ENCODE measurements at regions of chr6 and their contacts with region 1.

Region 1: GRCh38 chr6:163860287-163861081 is 446.0 kb downstream of the QKI start:
- DNase-seq: peak; percentile 86
- ATAC-seq: peak; percentile 79
- H3K4me3 ChIP-seq: peak overlapping the region; percentile 11; the same call in 1 of the 2 replicates
- H3K27ac ChIP-seq: peak overlapping the region; percentile 85
- H3K4me1 ChIP-seq: 0 out of 2 replicates have a peak, but pooled peaks cover 2% of the 10 kb centered on the region
- H3K27me3 ChIP-seq: no peaks in the 10 kb centered on the region
- CTCF ChIP-seq: no peak
- POLR2A ChIP-seq: 0 out of 2 replicates have a peak, but pooled peaks have one; percentile 47
- RAD21 ChIP-seq: peak; percentile 23

Region 2: DNA sequence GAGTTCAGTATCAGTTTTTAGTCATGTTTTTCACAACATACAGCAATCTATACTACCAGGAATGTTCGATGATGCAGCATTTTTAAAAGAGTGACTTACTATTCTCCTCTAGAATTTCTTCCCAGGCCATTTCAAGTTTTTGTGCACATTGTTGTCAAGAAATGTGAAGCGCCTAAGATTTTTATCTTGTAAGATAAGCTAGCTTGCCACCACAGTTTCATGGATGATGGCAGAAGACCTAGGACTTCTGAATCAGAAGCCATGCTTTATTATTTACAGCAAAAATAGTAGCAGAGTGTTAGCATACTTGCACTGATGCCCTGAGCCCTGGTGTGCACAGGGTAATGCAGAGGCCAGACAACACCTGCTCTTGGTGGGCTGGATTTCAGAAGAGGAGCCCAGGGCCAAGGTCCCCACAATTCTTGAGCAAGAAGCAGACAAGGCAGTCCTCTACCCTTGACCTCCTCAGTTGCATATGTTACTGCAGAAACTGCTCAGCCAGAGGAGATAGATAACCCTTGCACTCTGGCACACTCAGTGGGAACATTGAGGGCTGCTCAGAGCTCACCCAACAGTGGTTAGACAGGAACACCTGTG is 346.8 kb before region 1 on chr6:
- CTCF ChIA-PET with region 1: no interaction called
- POLR2A ChIA-PET with region 1: no interaction called
- dilution Hi-C with region 1: no loop called
- in situ Hi-C with region 1: no loop called
- intact Hi-C with region 1: no loop called
- DNase-seq: no peak
- ATAC-seq: no peak
- H3K4me3 ChIP-seq: no peak overlapping the region
- H3K27ac ChIP-seq: no peak overlapping the region
- H3K4me1 ChIP-seq: peaks cover 2% of the 10 kb centered on the region; the same call in 1 of the 2 replicates
- H3K27me3 ChIP-seq: no peaks in the 10 kb centered on the region
- CTCF ChIP-seq: no peak
- POLR2A ChIP-seq: no peak
- RAD21 ChIP-seq: no peak

Region 3: GRCh38 chr6:163585932-163586437 is 274.5 kb before region 1 on chr6:
- CTCF ChIA-PET with region 1: no interaction called
- POLR2A ChIA-PET with region 1: no interaction called
- dilution Hi-C with region 1: no loop called
- in situ Hi-C with region 1: no loop called
- intact Hi-C with region 1: loop called (anchors 10 kb)
- DNase-seq: peak; percentile 93
- ATAC-seq: peak; percentile 89
- H3K4me3 ChIP-seq: no peak overlapping the region
- H3K27ac ChIP-seq: peak overlapping the region; percentile 23; the same call in 1 of the 2 replicates
- H3K4me1 ChIP-seq: peaks cover 7% of the 10 kb centered on the region
- H3K27me3 ChIP-seq: no peaks in the 10 kb centered on the region
- CTCF ChIP-seq: no peak
- POLR2A ChIP-seq: no peak
- RAD21 ChIP-seq: no peak

Region 4: GRCh38 chr6:163679753-163680152 is 180.7 kb before region 1 on chr6:
- CTCF ChIA-PET with region 1: no interaction called
- POLR2A ChIA-PET with region 1: no interaction called
- dilution Hi-C with region 1: no loop called
- in situ Hi-C with region 1: no loop called
- intact Hi-C with region 1: no loop called
- DNase-seq: peak; percentile 7
- ATAC-seq: no peak
- H3K4me3 ChIP-seq: no peak overlapping the region
- H3K27ac ChIP-seq: no peak overlapping the region
- H3K4me1 ChIP-seq: no peaks in the 10 kb centered on the region
- H3K27me3 ChIP-seq: peaks cover 2% of the 10 kb centered on the region; the same call in 1 of the 2 replicates
- CTCF ChIP-seq: no peak
- POLR2A ChIP-seq: no peak
- RAD21 ChIP-seq: no peak

Region 5: GRCh38 chr6:163745536-163746400 is 114.7 kb before region 1 on chr6:
- CTCF ChIA-PET with region 1: no interaction called
- POLR2A ChIA-PET with region 1: no interaction called
- dilution Hi-C with region 1: no loop called
- in situ Hi-C with region 1: no loop called
- intact Hi-C with region 1: loop called (anchors 1 kb)
- DNase-seq: peak; percentile 92
- ATAC-seq: peak; percentile 98
- H3K4me3 ChIP-seq: no peak overlapping the region
- H3K27ac ChIP-seq: no peak overlapping the region
- H3K4me1 ChIP-seq: peaks cover 4% of the 10 kb centered on the region
- H3K27me3 ChIP-seq: no peaks in the 10 kb centered on the region
- CTCF ChIP-seq: no peak
- POLR2A ChIP-seq: no peak
- RAD21 ChIP-seq: 0 out of 2 replicates have a peak, but pooled peaks have one; percentile 2